ENCODE measurements at regions of chr10 and their contacts with region 1.

Region 1: DNA sequence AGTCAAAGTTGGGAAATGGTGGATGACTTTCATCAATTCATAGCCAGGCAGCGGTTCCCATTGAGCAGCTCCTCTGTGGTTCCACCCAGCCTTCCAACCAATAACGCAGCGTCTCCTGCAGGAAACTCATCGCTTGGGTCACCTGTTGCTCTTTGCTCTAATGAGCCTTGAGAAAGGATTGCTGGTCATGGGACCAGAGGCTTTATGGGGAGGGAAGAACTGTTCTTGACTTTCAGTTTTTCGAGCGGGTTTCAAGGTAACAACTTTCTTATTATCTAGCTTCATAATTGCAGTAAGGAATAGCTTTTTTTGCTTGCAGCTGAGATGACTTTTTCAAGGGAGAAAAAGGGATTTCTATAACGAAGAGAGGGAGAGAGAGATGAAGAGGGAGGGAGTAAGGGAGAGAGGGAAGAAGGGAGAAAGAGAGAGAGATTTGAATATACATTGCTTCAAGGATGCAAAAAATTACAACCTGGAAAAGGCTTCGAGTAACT is 405 bp upstream of the ENTPD1 start:
- DNase-seq: peak in 1 of 2 donors; percentile 73
- ATAC-seq: peak; percentile 62
- H3K4me3 ChIP-seq: peak overlapping the region; percentile 49 to 78
- H3K27ac ChIP-seq: peak overlapping the region; percentile 15 to 21
- H3K4me1 ChIP-seq: peaks cover 2 to 5% of the 10 kb centered on the region in 2 donors
- H3K27me3 ChIP-seq: no peaks in the 10 kb centered on the region

Region 2: DNA sequence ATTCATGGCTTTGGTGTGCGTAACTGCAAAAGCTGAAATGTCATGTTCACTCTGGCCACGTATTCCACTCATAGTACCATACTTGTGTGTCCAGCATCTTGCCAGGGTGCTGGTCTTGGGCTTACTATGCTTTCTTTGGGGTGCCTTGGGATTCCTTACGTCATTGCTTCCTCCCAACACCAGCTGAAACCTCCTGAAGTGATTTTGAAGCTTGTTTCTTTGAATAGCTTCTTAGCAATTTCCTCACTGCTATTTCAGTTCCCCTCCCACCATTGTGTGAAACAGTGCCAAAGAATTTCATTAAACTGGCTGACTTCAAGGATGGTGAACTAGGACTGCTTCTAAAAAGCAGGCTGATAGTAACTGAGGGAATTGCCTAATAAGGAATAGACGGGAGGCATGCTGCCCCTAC is 37.3 kb after region 1 on chr10:
- intact Hi-C with region 1: loop called in 1 of 2 experiments (anchors 5 kb)
- DNase-seq: peak in 1 of 2 donors; percentile 49
- ATAC-seq: peak; percentile 79
- H3K4me3 ChIP-seq: no peak overlapping the region
- H3K27ac ChIP-seq: peak overlapping the region in 1 of 2 donors; percentile 89
- H3K4me1 ChIP-seq: peaks cover 10 to 13% of the 10 kb centered on the region in 2 donors
- H3K27me3 ChIP-seq: no peaks in the 10 kb centered on the region

Region 3: DNA sequence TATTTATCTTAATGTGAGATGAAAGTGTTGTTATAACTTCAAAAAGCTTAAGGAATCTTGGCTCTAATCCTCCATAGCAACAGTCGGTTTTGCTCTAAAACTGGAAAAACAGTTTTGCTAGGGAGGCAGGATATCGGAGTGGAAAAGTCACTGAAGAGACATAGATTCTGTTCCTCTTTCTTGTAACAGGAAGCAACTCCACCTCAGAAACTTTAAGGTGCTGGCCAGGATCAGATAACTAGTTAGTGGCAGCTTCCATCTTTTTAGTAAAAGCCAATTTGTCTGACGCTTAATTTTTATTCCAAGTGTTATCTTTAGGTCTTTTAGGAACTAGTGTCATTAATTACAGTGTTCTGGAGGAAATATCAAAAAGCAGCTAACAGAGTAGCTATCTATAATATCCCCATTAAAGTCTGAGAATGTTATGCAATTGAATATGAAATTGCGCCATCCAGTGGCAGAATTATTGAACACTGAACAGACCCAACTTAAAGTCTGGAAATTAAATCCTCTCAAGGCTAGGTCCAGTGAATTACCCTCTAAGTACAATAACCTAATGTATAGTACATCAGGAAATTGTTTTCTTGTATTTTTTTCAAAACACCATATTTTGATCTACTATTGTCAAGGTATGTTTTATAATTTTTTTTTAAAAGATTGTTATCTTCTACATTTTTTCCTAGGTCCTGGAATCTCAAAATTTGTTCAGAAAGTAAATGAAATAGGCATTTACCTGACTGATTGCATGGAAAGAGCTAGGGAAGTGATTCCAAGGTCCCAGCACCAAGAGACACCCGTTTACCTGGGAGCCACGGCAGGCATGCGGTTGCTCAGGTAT is 86.3 kb after region 1 on chr10:
- intact Hi-C with region 1: loop called in 1 of 2 experiments (anchors 5 kb)
- DNase-seq: no peak
- ATAC-seq: peak; percentile 83
- H3K4me3 ChIP-seq: no peak overlapping the region
- H3K27ac ChIP-seq: peak overlapping the region in 1 of 2 donors; percentile 25
- H3K4me1 ChIP-seq: no peaks in the 10 kb centered on the region
- H3K27me3 ChIP-seq: no peaks in the 10 kb centered on the region

Region 4: GRCh38 chr10:96719850-96720421 is 964.4 kb after region 1 on chr10:
- intact Hi-C with region 1: no loop called
- DNase-seq: peak; percentile 85 to 87
- ATAC-seq: peak; percentile 80
- H3K4me3 ChIP-seq: peak overlapping the region; percentile 21 to 74
- H3K27ac ChIP-seq: no peak overlapping the region
- H3K4me1 ChIP-seq: peaks cover 0 to 5% of the 10 kb centered on the region in 2 donors
- H3K27me3 ChIP-seq: no peaks in the 10 kb centered on the region